HEK293 (cell line): ENCODE measurements at regions of chr19 and their contacts with region 1.

Region 1: GRCh38 chr19:1503089-1503933 is 9.5 kb downstream of the ADAMTSL5 start:
- H3K4me3 ChIP-seq: no peak overlapping the region
- H3K27ac ChIP-seq: no peak overlapping the region; the same call in 1 of the 2 replicates
- H3K4me1 ChIP-seq: peaks cover 3% of the 10 kb centered on the region; the same call in 1 of the 2 replicates
- CTCF ChIP-seq: peak; percentile 95

Region 2: DNA sequence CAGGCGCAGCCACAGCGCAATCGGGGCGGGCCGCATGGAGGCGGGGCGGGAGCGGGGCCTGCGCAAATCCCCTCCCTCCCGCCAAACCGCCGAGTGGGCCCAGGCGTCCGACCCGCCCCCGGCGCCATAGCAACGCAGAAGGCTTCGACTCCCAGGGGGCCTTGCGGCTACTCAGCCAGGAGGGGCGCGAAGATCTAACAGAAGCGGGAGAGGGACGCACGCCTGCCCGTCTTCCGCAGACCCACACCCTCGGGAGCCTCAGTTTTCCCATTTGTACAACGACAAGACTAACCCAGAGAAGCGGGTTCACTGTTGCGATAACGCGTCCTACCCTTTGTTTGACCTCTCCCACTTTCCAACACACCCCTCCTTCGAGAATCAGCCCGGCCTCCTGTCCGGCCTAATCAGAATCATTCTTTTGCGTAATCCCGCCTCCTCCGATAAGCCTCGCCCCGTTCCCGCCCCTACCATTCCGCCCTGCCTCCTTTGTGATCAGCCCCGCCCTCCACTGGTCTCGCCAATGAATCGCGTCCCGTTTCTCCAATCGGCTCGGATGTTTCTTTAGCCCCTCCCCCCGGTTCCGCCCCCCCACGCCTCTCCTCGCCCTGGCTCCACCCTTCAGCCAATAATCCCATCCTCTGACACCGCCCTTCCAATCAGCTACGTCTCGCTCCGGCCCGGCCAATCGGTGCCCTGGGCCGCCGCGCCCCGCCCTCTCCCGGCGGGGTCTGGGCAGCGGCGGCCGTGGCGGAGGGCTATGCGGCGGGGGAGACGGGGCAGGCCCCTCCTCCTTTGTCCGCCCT is 12.8 kb before region 1 on chr19 and contains the start of gene PCSK4:
- CTCF ChIA-PET with region 1: interaction called, 11 read pairs
- POLR2A ChIA-PET with region 1: interaction called, 6 read pairs
- H3K4me3 ChIP-seq: peak within 1 kb of the TSS; percentile 46
- H3K27ac ChIP-seq: peak within 1 kb of the TSS; percentile 34; the same call in 1 of the 2 replicates
- H3K4me1 ChIP-seq: peaks cover 5% of the 10 kb centered on the region
- CTCF ChIP-seq: no peak

Region 3: GRCh38 chr19:1568320-1569019 is 65.2 kb after region 1 on chr19 and contains the start of gene MEX3D:
- CTCF ChIA-PET with region 1: no interaction called
- POLR2A ChIA-PET with region 1: no interaction called
- H3K4me3 ChIP-seq: peak within 1 kb of the TSS; percentile 56
- H3K27ac ChIP-seq: peak within 1 kb of the TSS; percentile 31; the same call in 1 of the 2 replicates
- H3K4me1 ChIP-seq: no peaks in the 10 kb centered on the region
- CTCF ChIP-seq: no peak